GM18951 (cell line): ENCODE measurements at regions of chr10 and their contacts with region 1.

Region 1: GRCh38 chr10:13776861-13777311 is 190.1 kb downstream of the PRPF18 start:
- POLR2A ChIP-seq: no peak

Region 2: GRCh38 chr10:13669182-13669865 is 107.6 kb before region 1 on chr10:
- in situ Hi-C with region 1: loop called (anchors 5 kb)
- POLR2A ChIP-seq: no peak

Region 3: DNA sequence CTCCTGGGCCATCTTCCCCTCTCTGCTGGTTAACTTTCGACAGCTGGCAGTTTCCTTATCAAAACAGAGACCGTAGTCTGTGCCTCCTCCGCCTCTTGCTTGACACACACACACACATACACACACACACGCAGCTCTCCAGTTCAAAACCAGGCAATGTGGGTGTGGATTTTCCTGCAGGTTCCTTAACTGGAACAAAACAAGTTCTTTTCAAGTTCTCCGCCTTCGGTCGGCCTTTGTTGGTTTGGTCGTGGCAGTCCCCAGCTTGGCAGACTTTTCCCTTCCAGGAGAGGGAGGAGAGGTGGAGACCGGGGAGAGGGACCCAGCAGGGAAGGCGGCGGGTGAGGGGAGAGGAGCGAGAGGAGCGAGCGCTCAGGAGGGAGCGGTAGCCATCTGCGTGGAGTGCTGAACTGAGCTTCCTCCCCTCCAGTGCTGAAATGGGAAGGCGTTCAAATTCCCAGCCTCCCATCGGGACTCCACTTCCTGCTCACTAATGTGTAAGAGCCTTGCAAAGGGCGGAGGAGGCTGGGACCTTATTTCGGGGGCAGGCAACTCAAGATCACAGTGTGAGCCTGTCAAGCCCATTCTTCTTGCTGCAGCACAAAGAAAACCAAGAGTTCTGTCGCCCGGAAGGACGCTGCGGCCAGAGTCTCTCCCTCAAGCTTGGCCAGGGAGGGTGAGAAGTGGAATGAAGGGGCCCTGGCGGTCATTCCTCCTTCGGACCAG is 69.6 kb before region 1 on chr10:
- in situ Hi-C with region 1: loop called (anchors 10 kb)
- POLR2A ChIP-seq: peak; percentile 34